ENCODE measurements at regions of chr7 and their contacts with region 1.

Region 1: GRCh38 chr7:32216759-32217326 is 146.6 kb upstream of the PDE1C start:
- DNase-seq: peak in 2 of 3 donors; percentile 29 to 31
- H3K4me3 ChIP-seq: no peak overlapping the region
- H3K27ac ChIP-seq: no peak overlapping the region
- H3K4me1 ChIP-seq: no peaks in the 10 kb centered on the region
- H3K27me3 ChIP-seq: peaks cover 0 to 8% (median 0%) of the 10 kb centered on the region in 5 experiments

Region 2: DNA sequence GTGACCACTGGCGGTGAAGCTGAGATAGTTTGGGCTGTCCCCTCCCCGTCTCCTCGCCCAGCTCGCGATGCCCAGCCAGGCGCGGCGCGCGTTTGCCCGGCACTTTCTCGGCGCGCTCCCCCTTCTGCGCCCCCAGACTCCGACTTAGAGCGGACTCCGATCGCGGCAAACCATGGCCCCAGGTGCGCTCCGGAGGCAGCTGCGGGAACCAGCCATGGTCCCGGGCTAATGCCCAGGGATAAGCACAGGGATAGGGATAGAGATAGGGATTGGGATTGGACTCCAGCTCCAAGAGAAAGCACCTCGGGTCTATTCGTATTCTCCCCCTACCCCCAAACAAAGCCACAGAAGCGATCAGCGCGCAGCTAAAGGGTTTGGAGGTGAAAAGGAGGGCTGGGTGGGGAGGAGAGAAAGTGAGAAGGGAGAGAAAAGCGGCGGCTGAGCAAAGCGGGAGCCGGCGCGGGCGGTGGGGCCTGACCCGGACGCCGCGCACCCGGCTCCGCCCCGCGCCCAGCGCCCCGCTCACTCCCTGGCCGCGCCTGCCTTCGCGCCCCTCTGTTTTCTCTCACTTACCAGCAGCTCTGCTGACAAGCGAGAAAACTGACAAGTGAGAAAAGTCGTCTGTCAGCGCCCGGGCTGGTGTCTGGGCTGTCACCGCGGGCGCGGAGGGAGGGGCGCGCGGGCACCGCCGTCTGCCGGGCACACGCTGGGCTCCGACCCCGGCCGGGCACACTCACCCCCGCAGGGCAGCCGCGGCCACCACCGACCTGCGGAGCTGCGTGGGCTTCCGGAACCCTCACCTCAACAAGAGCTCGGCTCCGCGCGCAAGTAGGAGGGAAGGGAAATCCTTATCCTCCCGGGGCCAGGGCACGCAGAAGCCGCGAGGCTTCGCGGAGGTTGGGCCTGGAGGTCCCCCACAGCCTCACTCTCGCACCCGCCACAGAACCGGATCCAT is 146.2 kb before region 1 on chr7 and contains the start of gene PDE1C:
- CTCF ChIA-PET with region 1: no interaction called
- POLR2A ChIA-PET with region 1: no interaction called
- DNase-seq: peak; percentile 11 to 64 (median 54)
- H3K4me3 ChIP-seq: peak within 1 kb of the TSS; percentile 35 to 77 (median 53)
- H3K27ac ChIP-seq: no peak within 1 kb of the TSS
- H3K4me1 ChIP-seq: peaks cover 3 to 21% (median 10%) of the 10 kb centered on the region in 4 experiments
- H3K27me3 ChIP-seq: peaks cover 13 to 68% (median 21%) of the 10 kb centered on the region in 5 experiments

Region 3: GRCh38 chr7:32275216-32275979 is 58.6 kb after region 1 on chr7:
- CTCF ChIA-PET with region 1: interaction called, 27 read pairs
- POLR2A ChIA-PET with region 1: no interaction called
- DNase-seq: peak; percentile 78 to 95 (median 94)
- H3K4me3 ChIP-seq: no peak overlapping the region
- H3K27ac ChIP-seq: no peak overlapping the region
- H3K4me1 ChIP-seq: peaks cover 6 to 32% (median 12%) of the 10 kb centered on the region in 4 experiments
- H3K27me3 ChIP-seq: no peaks in the 10 kb centered on the region

Region 4: GRCh38 chr7:32347244-32347828 is 130.5 kb after region 1 on chr7:
- CTCF ChIA-PET with region 1: interaction called, 30 read pairs
- POLR2A ChIA-PET with region 1: no interaction called
- DNase-seq: peak; percentile 26 to 59 (median 46)
- H3K4me3 ChIP-seq: no peak overlapping the region
- H3K27ac ChIP-seq: no peak overlapping the region
- H3K4me1 ChIP-seq: no peaks in the 10 kb centered on the region
- H3K27me3 ChIP-seq: no peaks in the 10 kb centered on the region

Region 5: GRCh38 chr7:32357535-32358277 is 140.9 kb after region 1 on chr7:
- CTCF ChIA-PET with region 1: interaction called, 82 read pairs
- POLR2A ChIA-PET with region 1: no interaction called
- DNase-seq: peak; percentile 42 to 78 (median 72)
- H3K4me3 ChIP-seq: no peak overlapping the region
- H3K27ac ChIP-seq: no peak overlapping the region
- H3K4me1 ChIP-seq: no peaks in the 10 kb centered on the region
- H3K27me3 ChIP-seq: peaks cover 0 to 9% (median 3%) of the 10 kb centered on the region in 5 experiments

Measured in common myeloid progenitor, CD34-positive (primary cell).